CD8-positive, alpha-beta T cell (primary cell): ENCODE measurements at regions of chr2 and their contacts with region 1.

Region 1: DNA sequence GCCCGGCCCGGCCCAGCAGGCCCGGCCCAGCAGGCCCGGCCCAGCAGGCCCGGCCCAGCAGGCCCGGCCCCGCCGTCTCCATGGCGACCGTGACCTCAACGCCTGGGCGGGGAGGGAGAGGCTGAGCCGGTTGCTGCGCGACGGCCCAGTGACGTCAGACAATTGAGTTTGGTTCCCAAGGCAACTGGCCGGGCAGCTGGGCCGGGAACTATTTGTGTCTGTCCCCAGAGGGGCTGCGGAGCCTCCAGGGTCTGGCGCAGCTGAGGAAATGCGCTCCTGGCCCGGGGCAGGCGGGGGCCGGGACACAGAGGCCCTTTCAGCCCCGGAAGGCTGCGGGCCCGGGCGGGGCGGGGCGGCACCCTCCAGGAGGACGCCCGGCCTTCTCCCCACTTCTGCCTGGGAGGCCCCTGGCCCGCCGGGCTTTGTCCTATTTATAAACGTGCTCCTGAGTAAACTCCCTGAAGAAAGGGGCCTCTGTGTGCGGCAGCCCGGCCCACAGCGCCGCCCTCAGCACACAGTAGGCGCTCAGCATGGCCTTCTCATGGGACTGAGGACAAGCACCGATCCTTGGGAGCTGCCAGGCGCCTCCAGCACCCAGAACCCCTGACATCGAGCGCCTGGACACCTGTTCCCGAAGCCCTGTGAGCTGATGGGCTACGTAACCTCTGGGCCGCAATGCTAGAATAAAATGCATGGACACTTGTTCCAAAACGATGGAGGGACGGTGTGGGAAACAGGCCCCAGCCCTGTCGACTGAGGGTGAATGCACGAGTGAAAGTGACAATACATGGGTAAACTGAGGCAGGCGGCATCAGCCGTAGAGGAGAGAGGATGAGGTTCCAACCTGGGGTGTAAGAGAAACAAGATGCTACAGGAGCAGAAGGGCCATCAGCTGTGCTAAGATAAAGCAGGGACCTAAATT is 12.3 kb downstream of the TEX44 start:
- DNase-seq: peak; percentile 90 to 98 (median 95)
- ATAC-seq: peak; percentile 76
- H3K4me3 ChIP-seq: peak overlapping the region; percentile 37 to 42
- H3K4me3 Mint-ChIP-seq: peak overlapping the region; percentile 69
- H3K27ac ChIP-seq: peak overlapping the region; percentile 46 to 66
- H3K27ac Mint-ChIP-seq: peak overlapping the region; percentile 32
- H3K4me1 ChIP-seq: peaks cover 12% of the 10 kb centered on the region
- H3K4me1 Mint-ChIP-seq: peaks cover 7% of the 10 kb centered on the region
- H3K27me3 ChIP-seq: no peaks in the 10 kb centered on the region
- H3K27me3 Mint-ChIP-seq: peaks cover 2% of the 10 kb centered on the region
- CTCF ChIP-seq: no peak

Region 2: DNA sequence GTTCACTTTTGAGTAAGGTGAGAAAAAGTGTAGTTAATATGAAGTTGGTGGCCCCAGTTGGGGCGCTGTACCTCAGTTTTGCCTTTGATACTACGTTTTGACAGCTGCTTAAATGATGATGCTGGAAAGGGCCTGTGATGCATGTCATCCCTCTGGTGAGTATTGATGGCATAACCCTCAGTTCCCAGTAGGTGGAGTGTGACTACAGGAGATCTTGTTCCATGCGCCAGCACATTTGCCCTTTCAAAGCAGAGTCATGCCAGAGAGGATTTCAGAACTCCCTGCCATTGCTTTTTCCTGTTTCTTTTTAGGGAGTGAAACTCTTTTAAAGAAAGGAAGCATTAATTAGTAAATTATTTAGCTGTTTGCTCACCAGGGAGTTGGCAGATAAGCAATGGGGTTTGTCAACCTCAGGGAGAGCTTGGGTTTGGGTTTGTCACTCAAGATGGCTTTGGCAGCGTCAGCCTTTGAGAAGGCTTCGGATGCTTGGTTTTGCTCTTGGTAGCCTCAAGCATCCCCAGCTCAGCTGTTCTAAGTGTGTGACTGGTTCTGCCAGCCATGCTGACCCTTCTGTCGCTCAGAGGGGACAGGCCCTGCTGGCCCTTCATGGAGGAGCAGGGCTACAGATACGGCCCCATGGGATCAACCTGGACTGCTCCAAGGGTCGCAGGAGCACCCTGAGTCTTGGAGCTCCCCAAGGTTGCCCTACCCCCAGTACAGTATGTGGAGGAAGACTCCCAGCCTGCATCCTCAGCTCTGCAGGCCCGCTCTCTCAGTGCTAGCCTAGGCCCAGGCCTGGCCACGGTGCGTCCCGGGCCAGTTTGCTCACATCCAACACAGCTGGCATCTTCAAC is 377.4 kb before region 1 on chr2:
- CTCF ChIA-PET with region 1: interaction called, 3 read pairs
- POLR2A ChIA-PET with region 1: no interaction called
- intact Hi-C with region 1: loop called in 1 of 2 experiments (anchors 5 kb)
- DNase-seq: peak in 8 of 9 experiments; percentile 10 to 73 (median 37)
- ATAC-seq: peak; percentile 89
- H3K4me3 ChIP-seq: no peak overlapping the region
- H3K4me3 Mint-ChIP-seq: no peak overlapping the region
- H3K27ac ChIP-seq: no peak overlapping the region
- H3K27ac Mint-ChIP-seq: no peak overlapping the region
- H3K4me1 ChIP-seq: no peaks in the 10 kb centered on the region
- H3K4me1 Mint-ChIP-seq: no peaks in the 10 kb centered on the region
- H3K27me3 ChIP-seq: no peaks in the 10 kb centered on the region
- H3K27me3 Mint-ChIP-seq: no peaks in the 10 kb centered on the region
- CTCF ChIP-seq: peak; percentile 64

Region 3: DNA sequence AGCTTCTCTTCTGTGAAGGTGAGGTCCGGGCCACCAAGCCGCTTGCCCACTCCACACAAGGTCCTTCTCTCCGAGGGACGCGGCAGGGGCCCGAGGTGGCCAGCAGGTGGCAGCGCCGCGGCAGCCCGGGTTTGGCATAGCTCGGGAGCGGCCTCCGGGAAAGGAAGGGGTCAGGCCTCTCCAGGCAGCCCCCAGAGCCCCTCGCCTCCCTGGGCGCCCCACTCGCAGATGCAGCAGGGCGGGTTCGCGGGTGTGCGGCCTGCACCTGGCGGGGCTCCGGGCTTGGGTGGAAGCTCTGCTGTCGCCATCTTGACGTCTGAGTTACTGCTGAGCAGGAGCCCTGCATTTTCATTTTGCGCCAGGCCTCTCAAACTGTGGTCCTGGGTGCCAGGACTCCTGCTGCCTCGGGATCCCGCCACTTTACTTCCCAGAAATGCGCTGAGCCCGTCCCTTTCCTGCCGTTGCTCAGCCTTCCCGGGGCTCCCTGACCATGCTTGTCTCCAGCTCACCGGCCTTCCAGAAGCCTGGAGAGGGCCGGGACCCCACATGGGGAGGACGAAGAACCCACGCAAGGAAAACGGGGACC is 122.0 kb before region 1 on chr2:
- CTCF ChIA-PET with region 1: interaction called, 8 read pairs
- POLR2A ChIA-PET with region 1: no interaction called
- intact Hi-C with region 1: loop called in 1 of 2 experiments (anchors 1 kb)
- DNase-seq: peak; percentile 47 to 86 (median 73)
- ATAC-seq: peak; percentile 82
- H3K4me3 ChIP-seq: peak overlapping the region; percentile 71 to 73
- H3K4me3 Mint-ChIP-seq: peak overlapping the region; percentile 76
- H3K27ac ChIP-seq: peak overlapping the region; percentile 77 to 89
- H3K27ac Mint-ChIP-seq: peak overlapping the region; percentile 91
- H3K4me1 ChIP-seq: peaks cover 4% of the 10 kb centered on the region
- H3K4me1 Mint-ChIP-seq: peaks cover 14% of the 10 kb centered on the region
- H3K27me3 ChIP-seq: no peaks in the 10 kb centered on the region
- H3K27me3 Mint-ChIP-seq: no peaks in the 10 kb centered on the region
- CTCF ChIP-seq: peak; percentile 75

Region 4: DNA sequence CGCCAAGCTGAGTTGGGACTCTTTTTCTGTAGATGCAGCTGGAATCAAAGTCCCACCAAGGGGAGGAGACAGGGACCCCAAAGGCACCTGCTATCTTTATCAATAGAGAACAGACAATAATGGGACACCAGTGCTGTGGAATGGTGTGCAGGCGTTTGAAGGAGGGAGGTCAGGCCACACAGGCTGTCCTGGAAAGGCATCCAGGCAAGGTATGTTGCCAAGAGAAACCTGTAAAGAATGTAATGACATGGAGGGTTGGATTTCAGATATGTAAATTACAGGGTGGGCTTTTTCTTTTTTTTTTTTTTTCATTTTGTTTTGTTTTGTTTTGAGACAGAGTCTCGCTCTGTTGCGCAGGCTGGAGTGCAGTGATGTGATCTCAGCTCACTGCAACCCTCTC is 65.0 kb before region 1 on chr2:
- CTCF ChIA-PET with region 1: no interaction called
- POLR2A ChIA-PET with region 1: no interaction called
- intact Hi-C with region 1: no loop called
- DNase-seq: no peak
- ATAC-seq: no peak
- H3K4me3 ChIP-seq: no peak overlapping the region
- H3K4me3 Mint-ChIP-seq: no peak overlapping the region
- H3K27ac ChIP-seq: no peak overlapping the region
- H3K27ac Mint-ChIP-seq: no peak overlapping the region
- H3K4me1 ChIP-seq: no peaks in the 10 kb centered on the region
- H3K4me1 Mint-ChIP-seq: peaks cover 2% of the 10 kb centered on the region
- H3K27me3 ChIP-seq: no peaks in the 10 kb centered on the region
- H3K27me3 Mint-ChIP-seq: no peaks in the 10 kb centered on the region
- CTCF ChIP-seq: no peak

Region 5: GRCh38 chr2:231590619-231591018 is 14.3 kb before region 1 on chr2:
- CTCF ChIA-PET with region 1: interaction called, 21 read pairs
- POLR2A ChIA-PET with region 1: interaction called, 3 read pairs
- intact Hi-C with region 1: no loop called
- DNase-seq: no peak
- ATAC-seq: no peak
- H3K4me3 ChIP-seq: no peak overlapping the region
- H3K4me3 Mint-ChIP-seq: no peak overlapping the region
- H3K27ac ChIP-seq: no peak overlapping the region
- H3K27ac Mint-ChIP-seq: no peak overlapping the region
- H3K4me1 ChIP-seq: no peaks in the 10 kb centered on the region
- H3K4me1 Mint-ChIP-seq: no peaks in the 10 kb centered on the region
- H3K27me3 ChIP-seq: no peaks in the 10 kb centered on the region
- H3K27me3 Mint-ChIP-seq: no peaks in the 10 kb centered on the region
- CTCF ChIP-seq: no peak

Region 6: DNA sequence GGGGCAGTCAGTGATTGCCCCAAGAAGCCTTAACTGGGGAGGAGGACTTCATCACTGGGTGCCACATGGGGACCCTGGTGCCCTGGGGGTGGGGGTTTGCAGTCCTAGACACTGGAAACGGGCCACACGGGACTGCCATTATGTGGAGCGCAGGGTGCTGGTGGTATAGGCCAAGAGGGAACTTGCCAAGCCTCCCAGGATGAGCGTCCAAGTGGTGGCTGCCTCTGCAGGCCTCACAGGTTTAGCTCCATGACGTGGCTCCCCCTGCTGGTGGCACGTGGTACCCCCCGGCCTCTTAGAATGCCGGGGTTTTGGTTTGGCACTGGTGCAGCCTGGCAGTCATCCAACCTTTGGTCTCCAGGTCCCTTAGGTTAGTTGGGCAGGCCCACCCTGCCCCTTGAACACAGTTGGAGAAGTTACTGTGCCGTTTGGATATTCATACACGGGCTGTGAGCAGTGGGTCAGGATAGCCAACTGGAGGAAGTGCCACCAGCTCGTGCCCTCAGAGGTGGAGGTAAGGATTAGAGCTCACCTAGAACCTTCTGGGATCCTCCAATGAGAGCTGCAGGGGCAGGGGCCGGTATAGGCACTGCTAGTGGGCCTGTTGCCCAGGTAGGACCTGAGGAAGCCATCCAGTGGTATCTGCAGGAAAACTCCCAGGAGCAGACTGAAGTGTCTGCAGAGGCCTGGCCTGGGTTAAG is 108.9 kb after region 1 on chr2:
- CTCF ChIA-PET with region 1: interaction called, 160 read pairs
- POLR2A ChIA-PET with region 1: interaction called, 3 read pairs
- intact Hi-C with region 1: no loop called
- DNase-seq: peak; percentile 84 to 95 (median 91)
- ATAC-seq: peak; percentile 43
- H3K4me3 ChIP-seq: no peak overlapping the region
- H3K4me3 Mint-ChIP-seq: peak overlapping the region; percentile 54
- H3K27ac ChIP-seq: peak overlapping the region in 1 of 2 experiments; percentile 55
- H3K27ac Mint-ChIP-seq: peak overlapping the region; percentile 94
- H3K4me1 ChIP-seq: peaks cover 37% of the 10 kb centered on the region
- H3K4me1 Mint-ChIP-seq: peaks cover 39% of the 10 kb centered on the region
- H3K27me3 ChIP-seq: no peaks in the 10 kb centered on the region
- H3K27me3 Mint-ChIP-seq: no peaks in the 10 kb centered on the region
- CTCF ChIP-seq: peak; percentile 81